AG04449 (cell line): ENCODE measurements at regions of chr4 and their contacts with region 1.

Region 1: DNA sequence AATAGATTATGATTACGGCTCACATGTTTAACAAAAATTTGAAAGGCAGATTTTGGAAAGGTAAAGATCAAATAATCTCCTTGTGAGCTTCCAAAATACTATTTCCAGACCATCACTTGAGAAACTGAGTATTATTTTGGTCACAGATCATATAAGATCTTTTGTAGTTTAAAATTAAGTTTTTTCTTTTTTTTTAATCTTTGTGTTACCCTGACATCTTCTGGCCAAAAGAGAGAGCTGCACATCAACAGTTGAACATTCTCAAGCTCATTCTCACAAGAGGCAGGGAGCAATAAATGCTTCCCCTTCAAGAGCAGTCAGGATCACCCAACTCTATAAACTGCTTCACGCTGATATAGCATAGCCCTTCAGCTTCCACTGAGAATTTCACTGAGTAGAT is 15.9 kb downstream of the TMEM192 start:
- DNase-seq: no peak
- H3K4me3 ChIP-seq: no peak overlapping the region
- CTCF ChIP-seq: peak; percentile 48

Region 2: DNA sequence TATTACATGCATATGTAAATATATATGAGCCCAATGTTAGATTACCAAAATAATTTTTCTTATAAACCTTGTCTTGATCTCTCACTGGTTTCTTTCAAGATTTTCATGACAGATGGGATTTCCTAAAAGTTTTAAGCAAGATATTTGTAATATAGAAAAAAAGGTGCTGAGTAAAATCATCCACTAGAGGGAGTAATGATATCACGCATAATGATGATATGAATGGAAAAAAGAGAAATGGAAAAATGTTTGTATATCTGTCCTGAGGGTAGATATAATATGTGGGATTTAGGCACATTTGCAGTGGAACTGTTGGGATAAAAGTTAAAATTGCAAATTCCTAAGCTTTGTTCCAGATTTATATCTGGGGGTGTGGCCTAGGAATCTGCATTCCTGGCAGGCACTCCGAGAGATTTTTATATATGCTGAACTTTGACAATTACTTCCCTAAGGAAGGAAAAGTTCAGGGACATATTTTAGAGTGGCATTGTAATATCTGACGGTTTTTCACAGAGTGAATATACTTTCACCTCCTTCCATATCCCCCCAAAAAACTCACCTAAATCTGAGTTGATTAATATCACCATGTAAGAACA is 1541.8 kb before region 1 on chr4:
- CTCF ChIA-PET with region 1: interaction called, 22 read pairs
- POLR2A ChIA-PET with region 1: no interaction called
- DNase-seq: no peak
- H3K4me3 ChIP-seq: no peak overlapping the region
- CTCF ChIP-seq: peak; percentile 32

Region 3: DNA sequence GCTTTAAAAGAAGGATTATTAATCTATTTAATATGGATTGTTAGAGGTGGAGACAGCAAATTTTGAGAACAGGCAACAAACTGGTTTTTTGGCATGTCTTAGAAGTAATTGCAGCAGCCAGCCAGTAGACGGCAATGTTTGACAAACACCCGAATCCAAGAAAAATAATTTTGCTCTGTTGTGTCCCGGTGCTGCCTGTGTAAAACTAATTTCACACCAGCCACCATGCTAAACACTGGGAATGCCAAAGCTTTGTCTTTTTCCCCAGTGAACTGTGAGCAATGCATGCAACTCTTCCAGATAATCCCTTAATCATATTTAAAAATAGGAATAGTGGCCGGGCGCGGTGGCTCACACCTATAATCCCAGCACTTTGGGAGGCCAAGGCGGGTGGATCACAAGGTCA is 317.0 kb before region 1 on chr4:
- CTCF ChIA-PET with region 1: interaction called, 33 read pairs
- POLR2A ChIA-PET with region 1: no interaction called
- DNase-seq: no peak
- H3K4me3 ChIP-seq: no peak overlapping the region
- CTCF ChIP-seq: peak; percentile 63

Region 4: DNA sequence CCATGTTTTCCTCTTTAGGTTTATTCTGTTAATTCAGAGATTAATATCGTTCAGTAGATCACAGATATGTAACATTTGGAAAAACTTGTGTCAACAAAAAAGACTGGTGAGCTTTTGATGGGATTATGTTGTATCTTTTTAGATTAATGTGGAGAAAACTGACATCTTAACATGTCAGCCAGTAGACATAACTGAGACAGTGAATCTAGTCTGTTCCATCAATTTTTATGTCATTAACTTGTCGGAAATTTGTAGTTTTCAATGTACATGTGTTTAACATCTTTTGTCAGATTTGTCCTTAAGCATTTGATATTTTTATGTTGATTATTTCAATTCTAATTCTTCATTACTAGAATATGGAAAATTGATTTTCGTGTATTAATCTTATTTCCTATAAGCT is 177.8 kb before region 1 on chr4:
- CTCF ChIA-PET with region 1: no interaction called
- POLR2A ChIA-PET with region 1: no interaction called
- DNase-seq: no peak
- H3K4me3 ChIP-seq: no peak overlapping the region
- CTCF ChIP-seq: no peak